ENCODE measurements at regions of chr11 and their contacts with region 1.

Region 1: GRCh38 chr11:107092667-107093066 is 74.4 kb upstream of the GUCY1A2 start:
- DNase-seq: no peak
- H3K4me3 ChIP-seq: no peak overlapping the region
- H3K27ac ChIP-seq: no peak overlapping the region
- H3K4me1 ChIP-seq: no peaks in the 10 kb centered on the region
- H3K27me3 ChIP-seq: no peaks in the 10 kb centered on the region
- CTCF ChIP-seq: no peak

Region 2: GRCh38 chr11:107102692-107103477 is 10.2 kb after region 1 on chr11:
- CTCF ChIA-PET with region 1: no interaction called
- POLR2A ChIA-PET with region 1: no interaction called
- intact Hi-C with region 1: loop called (anchors 2 kb)
- DNase-seq: peak; percentile 14
- H3K4me3 ChIP-seq: no peak overlapping the region
- H3K27ac ChIP-seq: no peak overlapping the region
- H3K4me1 ChIP-seq: no peaks in the 10 kb centered on the region
- H3K27me3 ChIP-seq: peaks cover 7% of the 10 kb centered on the region
- CTCF ChIP-seq: no peak

Measured in A673 (cell line).